ENCODE measurements at regions of chr2 and their contacts with region 1.

Region 1: DNA sequence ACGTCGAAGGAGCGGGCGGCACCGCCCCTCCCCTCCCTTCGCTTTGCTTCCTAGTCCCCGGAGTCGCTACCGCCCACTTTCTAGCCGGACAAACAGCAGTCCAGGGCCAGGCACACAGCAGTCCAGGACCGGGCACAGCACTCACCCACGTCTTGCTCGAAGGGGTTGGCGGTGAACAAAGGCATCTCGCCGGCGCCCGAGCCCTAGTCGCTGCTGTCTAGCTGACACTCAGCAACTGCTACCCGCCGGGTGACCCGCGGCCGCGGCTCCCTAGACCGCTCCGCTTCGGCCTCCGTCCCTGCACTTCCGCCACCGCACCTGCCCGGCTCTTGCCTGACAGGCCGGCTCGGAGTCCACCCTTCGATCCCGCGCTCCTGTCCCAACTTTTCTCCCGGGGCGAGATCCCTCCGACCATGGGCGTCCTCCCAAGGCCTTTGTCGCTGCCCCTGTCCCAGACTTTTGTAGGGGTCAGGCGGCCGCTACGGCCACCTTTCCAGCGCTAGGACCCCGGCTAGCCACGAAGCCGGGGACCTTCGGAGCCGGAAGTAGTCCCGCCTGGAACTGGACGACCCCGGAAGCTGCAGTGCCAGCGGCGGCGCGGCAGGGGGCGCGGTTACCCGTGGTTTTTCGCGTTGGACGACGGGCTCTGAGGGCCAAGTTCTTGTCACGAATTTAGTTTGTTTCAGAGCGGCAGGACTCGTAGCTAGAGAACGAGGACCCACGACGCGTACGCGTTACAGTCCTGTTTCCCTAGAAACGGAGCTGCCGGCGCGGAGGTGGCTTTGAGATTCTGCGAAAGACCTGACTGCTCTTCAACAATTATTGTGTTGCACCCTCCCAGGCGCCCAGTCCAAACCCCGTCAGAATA is at the start of gene STAM2:
- DNase-seq: peak; percentile 93

Region 2: GRCh38 chr2:152635635-152636298 is 460.1 kb after region 1 on chr2:
- CTCF ChIA-PET with region 1: interaction called, 10 read pairs
- POLR2A ChIA-PET with region 1: interaction called, 9 read pairs
- DNase-seq: peak; percentile 75